ENCODE measurements at regions of chr14 and their contacts with region 1.

Region 1: GRCh38 chr14:76133083-76133498 is 18.6 kb upstream of the GPATCH2L start:
- DNase-seq: peak; percentile 24
- ATAC-seq: peak; percentile 69; the same call in 1 of the 2 replicates
- H3K4me3 ChIP-seq: no peak overlapping the region
- H3K27ac ChIP-seq: no peak overlapping the region
- H3K4me1 ChIP-seq: no peaks in the 10 kb centered on the region
- H3K27me3 ChIP-seq: peaks cover 30% of the 10 kb centered on the region
- CTCF ChIP-seq: no peak
- POLR2A ChIP-seq: no peak
- RAD21 ChIP-seq: no peak

Region 2: GRCh38 chr14:75960231-75960630 is 172.9 kb before region 1 on chr14:
- CTCF ChIA-PET with region 1: no interaction called
- POLR2A ChIA-PET with region 1: no interaction called
- dilution Hi-C with region 1: no loop called
- in situ Hi-C with region 1: no loop called
- intact Hi-C with region 1: no loop called
- DNase-seq: no peak
- ATAC-seq: no peak
- H3K4me3 ChIP-seq: no peak overlapping the region
- H3K27ac ChIP-seq: no peak overlapping the region
- H3K4me1 ChIP-seq: no peaks in the 10 kb centered on the region
- H3K27me3 ChIP-seq: no peaks in the 10 kb centered on the region
- CTCF ChIP-seq: no peak
- POLR2A ChIP-seq: no peak
- RAD21 ChIP-seq: no peak

Region 3: DNA sequence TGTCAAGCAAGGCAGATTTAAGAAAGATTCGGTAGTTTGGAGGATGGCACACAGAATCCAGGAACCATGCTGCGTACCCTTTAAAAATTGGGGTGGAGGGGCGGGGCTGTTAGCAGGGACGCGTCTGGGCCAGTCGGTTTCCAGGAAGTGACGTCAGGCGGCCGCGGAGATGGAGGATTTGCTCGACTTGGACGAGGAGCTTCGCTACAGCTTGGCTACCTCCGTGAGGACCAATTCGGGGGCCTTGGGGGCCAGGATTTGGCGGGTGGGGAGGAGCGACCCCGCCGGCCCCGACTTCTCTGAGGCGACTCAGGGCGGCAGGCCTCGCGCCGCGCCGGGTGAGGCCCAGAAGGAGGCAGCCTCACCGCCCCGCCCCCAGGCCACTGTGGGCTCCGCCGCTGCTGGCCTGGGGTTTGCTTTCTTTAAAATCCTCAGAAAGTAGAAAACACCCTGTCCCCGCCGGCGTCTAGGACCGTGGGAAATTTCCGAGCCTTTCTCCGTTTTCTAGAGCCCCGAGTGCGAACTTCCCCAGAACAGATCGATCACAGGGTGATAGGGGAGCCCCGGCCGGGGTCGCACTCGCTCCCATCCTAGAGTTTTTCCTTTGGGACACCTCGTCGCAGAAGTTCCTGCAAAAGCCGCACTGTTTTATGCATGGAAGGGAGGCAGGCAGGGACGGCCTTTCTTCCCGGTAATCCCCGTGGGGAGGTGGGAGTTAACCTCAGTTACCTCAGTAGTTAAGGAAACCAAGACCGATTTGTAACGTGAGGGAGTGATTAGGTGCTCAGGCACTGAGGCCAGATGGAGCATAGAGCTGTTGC is 147.3 kb before region 1 on chr14 and contains the start of gene IFT43:
- CTCF ChIA-PET with region 1: no interaction called
- POLR2A ChIA-PET with region 1: no interaction called
- dilution Hi-C with region 1: no loop called
- in situ Hi-C with region 1: no loop called
- intact Hi-C with region 1: no loop called
- DNase-seq: peak; percentile 74
- ATAC-seq: peak; percentile 66
- H3K4me3 ChIP-seq: peak within 1 kb of the TSS; percentile 56
- H3K27ac ChIP-seq: peak within 1 kb of the TSS; percentile 55
- H3K4me1 ChIP-seq: peaks cover 2% of the 10 kb centered on the region; the same call in 1 of the 2 replicates
- H3K27me3 ChIP-seq: no peaks in the 10 kb centered on the region
- CTCF ChIP-seq: no peak
- POLR2A ChIP-seq: no peak; the same call in none of the 2 replicates
- RAD21 ChIP-seq: no peak
- total RNA-seq, gene IFT43: 29.4 and 41.4 TPM in 2 replicates

Region 4: DNA sequence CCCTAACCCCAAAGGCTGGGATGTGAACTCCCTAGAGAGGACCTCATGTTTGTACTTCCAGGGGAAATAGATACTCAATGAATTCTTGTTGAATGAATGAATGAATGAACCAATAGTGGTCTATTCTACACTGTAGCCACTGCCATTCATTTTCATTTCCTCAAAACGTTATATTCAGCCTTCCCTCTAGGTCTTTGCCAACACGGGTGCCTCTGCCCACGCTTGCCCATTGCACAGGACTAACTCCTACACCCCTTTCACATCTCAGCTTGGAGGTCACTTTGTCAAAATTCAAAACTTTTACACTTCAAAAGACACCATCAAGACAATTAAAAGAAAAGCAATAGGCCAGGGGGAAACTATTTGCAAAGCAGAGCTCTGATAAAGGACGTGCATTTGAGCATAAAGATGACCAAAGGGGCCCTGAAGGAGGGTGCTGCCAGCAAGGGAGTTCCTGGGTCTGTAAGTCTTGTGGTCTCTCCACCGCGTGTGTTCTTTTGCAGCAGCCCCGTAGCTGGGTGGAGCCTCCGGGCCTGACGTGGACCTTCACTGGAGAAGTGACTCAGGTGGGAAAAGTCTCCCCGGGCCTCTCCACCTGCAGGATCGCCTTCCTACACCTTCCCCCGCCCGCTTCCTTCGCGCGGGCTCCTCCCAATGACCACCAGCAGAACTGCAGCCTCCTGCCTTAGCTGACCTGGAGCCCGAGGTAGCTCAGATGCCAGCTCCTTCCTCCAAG is 1080.0 kb after region 1 on chr14:
- CTCF ChIA-PET with region 1: no interaction called
- POLR2A ChIA-PET with region 1: no interaction called
- dilution Hi-C with region 1: no loop called
- in situ Hi-C with region 1: no loop called
- intact Hi-C with region 1: loop called (anchors 5 kb)
- DNase-seq: no peak
- ATAC-seq: peak; percentile 68
- H3K4me3 ChIP-seq: no peak overlapping the region
- H3K27ac ChIP-seq: no peak overlapping the region
- H3K4me1 ChIP-seq: no peaks in the 10 kb centered on the region
- H3K27me3 ChIP-seq: peaks cover 3% of the 10 kb centered on the region; the same call in 1 of the 2 replicates
- CTCF ChIP-seq: peak; percentile 46
- POLR2A ChIP-seq: no peak
- RAD21 ChIP-seq: peak; percentile 19; the same call in 1 of the 2 replicates